HEK293T (cell line): ENCODE measurements at regions of chr2 and their contacts with region 1.

Region 1: DNA sequence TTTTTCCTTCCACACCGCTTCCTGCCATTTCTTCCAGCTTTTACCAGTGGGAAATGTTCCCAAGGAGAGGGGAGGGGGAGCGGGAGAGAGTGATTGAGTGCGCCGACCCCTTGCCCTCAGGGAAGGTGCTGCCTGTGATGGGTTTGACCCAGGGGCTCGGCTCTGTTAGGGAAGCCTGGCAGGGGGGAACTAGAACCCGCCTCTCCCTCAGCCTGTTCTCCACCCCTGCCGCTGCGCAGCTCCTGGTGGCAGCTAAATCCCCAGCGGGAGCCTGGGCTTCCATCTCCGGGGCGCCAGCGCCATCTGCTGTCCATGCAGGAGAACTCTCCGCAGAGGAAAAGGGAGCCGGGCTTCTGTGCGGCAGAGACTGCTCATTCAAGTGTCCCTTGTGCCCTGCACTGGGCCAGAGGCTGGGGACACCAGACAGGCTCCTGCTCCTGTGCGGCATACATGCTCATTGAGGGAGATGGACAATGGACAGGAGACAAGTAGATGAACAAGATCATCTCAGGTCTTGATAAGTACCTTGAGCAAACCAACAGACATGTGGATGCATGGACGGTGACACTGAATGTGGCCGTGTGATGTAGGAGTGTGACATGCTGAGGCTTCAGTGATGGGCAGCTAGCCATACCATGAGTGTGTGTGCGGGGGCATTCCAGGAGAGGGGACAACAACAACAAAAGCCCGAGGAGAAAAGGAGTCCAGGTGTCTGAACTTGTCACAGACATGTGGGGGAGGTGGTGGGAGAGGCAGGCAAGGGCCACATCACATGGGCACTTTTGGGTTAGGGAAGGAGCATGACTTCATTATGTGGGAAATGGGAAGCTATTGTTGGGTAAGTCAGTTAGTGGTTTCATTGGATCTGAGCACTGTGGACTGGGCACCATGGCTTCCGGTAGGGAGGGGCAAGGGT is 13.3 kb downstream of the CHPF start:
- DNase-seq: peak; percentile 90

Region 2: GRCh38 chr2:219459460-219460311 is 70.6 kb before region 1 on chr2:
- CTCF ChIA-PET with region 1: interaction called, 13 read pairs
- POLR2A ChIA-PET with region 1: no interaction called
- DNase-seq: peak; percentile 86

Region 3: GRCh38 chr2:219484343-219485200 is 45.7 kb before region 1 on chr2:
- CTCF ChIA-PET with region 1: interaction called, 13 read pairs
- POLR2A ChIA-PET with region 1: no interaction called
- DNase-seq: no peak

Region 4: GRCh38 chr2:219509780-219510511 is 20.4 kb before region 1 on chr2:
- CTCF ChIA-PET with region 1: interaction called, 25 read pairs
- POLR2A ChIA-PET with region 1: interaction called, 3 read pairs
- DNase-seq: peak; percentile 70